ENCODE measurements at regions of chr1 and their contacts with region 1.

Region 1: GRCh38 chr1:8015036-8015808 is 10.9 kb downstream of the ERRFI1 start:
- DNase-seq: peak; percentile 89
- ATAC-seq: peak; percentile 73
- H3K4me3 ChIP-seq: no peak overlapping the region
- H3K27ac ChIP-seq: peak overlapping the region; percentile 58; the same call in 1 of the 2 replicates
- H3K4me1 ChIP-seq: peaks cover 20% of the 10 kb centered on the region
- H3K27me3 ChIP-seq: no peaks in the 10 kb centered on the region
- CTCF ChIP-seq: peak; percentile 70
- POLR2A ChIP-seq: peak; percentile 39
- RAD21 ChIP-seq: peak; percentile 64

Region 2: DNA sequence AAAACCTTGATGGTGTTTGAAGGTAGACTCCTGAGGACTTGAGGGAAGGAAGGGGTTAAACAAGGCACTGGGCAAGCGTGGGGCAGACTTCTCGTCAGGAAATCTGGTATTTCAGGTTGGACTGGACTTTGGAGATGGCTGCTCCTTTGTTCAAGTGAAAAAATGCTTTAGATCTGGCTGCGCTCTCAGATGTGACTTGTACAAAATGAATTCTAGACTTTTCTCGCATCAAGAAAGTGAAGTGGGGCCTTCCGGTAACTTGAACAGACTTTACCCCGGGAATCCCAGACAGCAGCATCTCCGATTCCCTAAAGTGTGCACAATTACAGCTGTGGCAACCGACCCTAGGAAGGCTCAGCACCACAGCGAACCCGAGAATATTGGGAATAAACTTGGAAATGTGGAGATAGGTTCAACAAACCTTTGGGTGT is 55.2 kb after region 1 on chr1:
- CTCF ChIA-PET with region 1: no interaction called
- POLR2A ChIA-PET with region 1: no interaction called
- dilution Hi-C with region 1: no loop called
- in situ Hi-C with region 1: no loop called
- intact Hi-C with region 1: no loop called
- DNase-seq: no peak
- ATAC-seq: no peak
- H3K4me3 ChIP-seq: no peak overlapping the region
- H3K27ac ChIP-seq: no peak overlapping the region
- H3K4me1 ChIP-seq: peaks cover under 1% of the 10 kb centered on the region; the same call in 1 of the 2 replicates
- H3K27me3 ChIP-seq: no peaks in the 10 kb centered on the region
- CTCF ChIP-seq: no peak
- POLR2A ChIP-seq: no peak
- RAD21 ChIP-seq: no peak

Region 3: DNA sequence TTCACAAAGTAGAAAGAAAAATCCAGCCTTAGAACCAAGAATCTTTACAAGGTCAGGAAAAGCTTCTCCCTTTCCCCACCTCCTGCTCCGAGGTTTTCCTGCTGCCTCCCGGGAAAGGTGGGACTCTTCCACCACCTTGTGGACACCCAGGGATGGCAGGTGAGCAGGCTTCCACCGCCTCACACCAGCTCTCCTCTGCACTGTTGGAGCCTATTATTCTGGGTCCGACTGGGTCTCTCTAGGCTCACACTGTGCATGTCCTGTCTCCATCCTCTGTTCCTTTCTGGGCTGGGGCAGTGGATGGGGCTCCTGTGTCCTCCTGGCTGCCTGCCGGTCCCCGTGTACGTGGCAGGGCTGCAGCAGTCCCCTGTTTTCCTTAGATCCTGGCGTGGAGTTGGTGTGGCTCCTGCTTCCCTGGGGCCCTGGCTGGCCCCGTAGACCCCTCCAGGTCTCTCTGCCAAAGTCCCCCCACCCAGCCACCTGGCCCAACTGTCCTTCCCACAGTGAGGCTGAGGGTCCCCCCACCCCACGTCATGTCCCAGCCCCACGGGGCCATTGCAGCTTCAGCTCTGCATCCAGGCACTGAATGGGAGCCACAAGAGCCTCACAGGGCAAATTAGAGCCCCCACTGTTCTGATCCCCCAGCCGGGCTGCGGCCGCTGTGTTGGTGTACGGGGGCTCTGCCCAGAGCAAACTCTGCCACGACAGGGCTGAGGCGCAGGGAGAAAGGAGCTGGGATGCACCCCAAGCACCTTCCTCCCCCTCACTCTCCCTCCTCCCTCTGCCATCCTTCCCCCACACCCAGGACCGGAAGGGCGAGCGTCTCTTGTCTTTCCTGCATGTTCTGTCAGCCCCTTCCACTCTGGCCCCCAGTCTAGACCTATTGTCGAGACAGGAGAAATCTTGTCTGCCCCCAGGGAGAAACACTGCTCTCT is 299.4 kb after region 1 on chr1:
- CTCF ChIA-PET with region 1: interaction called, 27 read pairs
- POLR2A ChIA-PET with region 1: no interaction called
- dilution Hi-C with region 1: loop called (anchors 25 kb)
- in situ Hi-C with region 1: loop called (anchors 5 kb)
- intact Hi-C with region 1: loop called (anchors 1 kb)
- DNase-seq: peak; percentile 77
- ATAC-seq: peak; percentile 86
- H3K4me3 ChIP-seq: no peak overlapping the region
- H3K27ac ChIP-seq: no peak overlapping the region; the same call in 1 of the 2 replicates
- H3K4me1 ChIP-seq: peaks cover 10% of the 10 kb centered on the region
- H3K27me3 ChIP-seq: no peaks in the 10 kb centered on the region
- CTCF ChIP-seq: peak; percentile 98
- POLR2A ChIP-seq: peak; percentile 70
- RAD21 ChIP-seq: peak; percentile 100

Region 4: DNA sequence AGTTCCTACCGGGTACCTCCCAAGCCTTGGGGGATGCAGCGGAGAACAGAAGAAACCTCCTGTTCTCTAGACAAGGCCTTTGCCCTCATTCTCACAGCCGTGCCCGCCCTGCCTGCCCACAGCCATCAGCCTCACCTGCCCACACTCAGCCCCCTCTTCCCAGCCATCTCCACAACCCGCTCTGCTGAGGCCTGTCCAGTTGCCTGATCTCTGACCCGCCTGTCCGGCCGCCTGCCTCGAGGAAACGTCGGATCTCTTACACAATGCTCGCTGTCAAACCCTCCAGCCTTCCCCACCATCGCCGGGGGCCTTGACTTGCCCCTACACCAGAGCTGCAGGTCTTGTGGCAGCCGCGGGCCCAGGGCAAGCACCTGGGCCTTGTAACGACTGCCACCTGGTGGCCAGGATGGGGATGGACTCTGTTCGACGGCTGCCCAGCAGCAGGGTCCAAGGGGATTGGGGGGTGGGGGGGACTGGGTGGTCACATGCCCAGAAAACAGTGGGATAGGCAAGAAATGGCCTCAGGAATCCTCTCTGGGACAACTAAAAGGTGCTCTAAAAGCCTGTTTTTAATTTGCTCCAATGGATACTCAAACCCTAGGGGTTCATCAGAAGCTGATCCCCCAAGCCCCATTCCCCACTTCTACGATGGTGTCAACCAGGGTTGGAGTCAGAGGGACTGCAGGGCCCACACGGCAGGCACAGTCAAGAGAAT is 333.7 kb after region 1 on chr1:
- CTCF ChIA-PET with region 1: interaction called, 6 read pairs
- POLR2A ChIA-PET with region 1: no interaction called
- dilution Hi-C with region 1: no loop called
- in situ Hi-C with region 1: no loop called
- intact Hi-C with region 1: loop called (anchors 1 kb)
- DNase-seq: peak; percentile 58
- ATAC-seq: peak; percentile 70
- H3K4me3 ChIP-seq: no peak overlapping the region
- H3K27ac ChIP-seq: no peak overlapping the region
- H3K4me1 ChIP-seq: peaks cover 17% of the 10 kb centered on the region
- H3K27me3 ChIP-seq: no peaks in the 10 kb centered on the region
- CTCF ChIP-seq: peak; percentile 76
- POLR2A ChIP-seq: no peak
- RAD21 ChIP-seq: peak; percentile 89